ENCODE measurements at regions of chr1 and their contacts with region 1.

Region 1: GRCh38 chr1:110312188-110313121 is 26.7 kb upstream of the RBM15 start:
- DNase-seq: peak; percentile 52
- ATAC-seq: peak; percentile 99
- H3K4me3 Mint-ChIP-seq: no peak overlapping the region
- H3K27ac Mint-ChIP-seq: no peak overlapping the region
- H3K4me1 Mint-ChIP-seq: peaks cover 3% of the 10 kb centered on the region
- H3K27me3 Mint-ChIP-seq: no peaks in the 10 kb centered on the region
- CTCF ChIP-seq: peak; percentile 43

Region 2: GRCh38 chr1:110196917-110197765 is 115.3 kb before region 1 on chr1:
- CTCF ChIA-PET with region 1: interaction called, 459 read pairs
- POLR2A ChIA-PET with region 1: interaction called, 7 read pairs
- intact Hi-C with region 1: no loop called
- DNase-seq: no peak
- ATAC-seq: peak; percentile 98
- H3K4me3 Mint-ChIP-seq: no peak overlapping the region
- H3K27ac Mint-ChIP-seq: no peak overlapping the region
- H3K4me1 Mint-ChIP-seq: peaks cover 3% of the 10 kb centered on the region
- H3K27me3 Mint-ChIP-seq: no peaks in the 10 kb centered on the region
- CTCF ChIP-seq: peak; percentile 36

Region 3: GRCh38 chr1:110203021-110203661 is 109.3 kb before region 1 on chr1:
- CTCF ChIA-PET with region 1: interaction called, 459 read pairs
- POLR2A ChIA-PET with region 1: interaction called, 23 read pairs
- intact Hi-C with region 1: loop called (anchors 1 kb)
- DNase-seq: no peak
- ATAC-seq: peak; percentile 74
- H3K4me3 Mint-ChIP-seq: no peak overlapping the region
- H3K27ac Mint-ChIP-seq: no peak overlapping the region
- H3K4me1 Mint-ChIP-seq: peaks cover 12% of the 10 kb centered on the region
- H3K27me3 Mint-ChIP-seq: no peaks in the 10 kb centered on the region
- CTCF ChIP-seq: peak; percentile 37

Region 4: DNA sequence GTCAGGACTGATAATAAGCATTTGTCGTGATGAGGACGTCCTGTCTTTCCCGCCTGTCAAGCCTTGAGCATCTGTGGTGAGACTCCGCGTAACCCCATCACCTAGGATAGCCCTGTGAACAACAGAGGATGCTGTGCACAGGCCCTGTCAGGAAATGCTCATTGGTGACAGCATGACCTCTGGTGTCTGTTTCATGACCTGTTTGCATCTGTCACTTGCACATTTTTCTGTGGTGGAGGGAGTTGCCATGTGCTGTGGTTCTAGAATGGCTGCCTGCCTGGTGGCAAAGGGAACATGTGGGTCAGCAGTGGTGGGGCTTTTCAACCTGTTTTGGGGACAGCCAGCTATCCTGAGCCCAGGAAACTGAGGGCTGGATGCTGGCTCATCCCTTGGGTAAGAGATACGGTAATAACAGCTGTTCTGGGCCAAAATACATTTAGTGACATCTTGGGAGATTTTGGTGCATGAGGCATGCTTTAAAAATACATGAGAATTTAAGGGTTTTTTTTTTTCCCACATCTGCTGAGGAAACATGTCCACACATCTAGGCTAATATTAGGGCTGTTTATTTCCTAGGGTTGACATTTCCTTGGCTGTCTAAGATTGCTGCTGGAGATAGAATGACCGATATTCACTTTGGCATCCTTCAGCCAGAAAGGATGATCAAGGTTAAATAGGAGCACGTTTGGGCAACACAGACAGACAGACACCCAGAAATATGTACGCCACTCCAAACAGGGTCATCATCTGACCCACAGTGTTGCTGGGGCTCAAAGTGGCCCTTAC is 49.4 kb before region 1 on chr1:
- CTCF ChIA-PET with region 1: interaction called, 3 read pairs
- POLR2A ChIA-PET with region 1: no interaction called
- intact Hi-C with region 1: loop called (anchors 5 kb)
- DNase-seq: no peak
- ATAC-seq: no peak
- H3K4me3 Mint-ChIP-seq: no peak overlapping the region
- H3K27ac Mint-ChIP-seq: no peak overlapping the region
- H3K4me1 Mint-ChIP-seq: peaks cover 7% of the 10 kb centered on the region
- H3K27me3 Mint-ChIP-seq: no peaks in the 10 kb centered on the region
- CTCF ChIP-seq: no peak

Region 5: GRCh38 chr1:110630839-110631663 is 318.6 kb after region 1 on chr1:
- CTCF ChIA-PET with region 1: no interaction called
- POLR2A ChIA-PET with region 1: no interaction called
- intact Hi-C with region 1: no loop called
- DNase-seq: peak; percentile 72
- ATAC-seq: peak; percentile 73
- H3K4me3 Mint-ChIP-seq: no peak overlapping the region
- H3K27ac Mint-ChIP-seq: no peak overlapping the region
- H3K4me1 Mint-ChIP-seq: peaks cover 46% of the 10 kb centered on the region
- H3K27me3 Mint-ChIP-seq: no peaks in the 10 kb centered on the region
- CTCF ChIP-seq: peak; percentile 82

Measured in activated B cell treated with CpG ODN at 0.5 μM for 24 hours (primary cell).